ENCODE measurements at regions of chr20 and their contacts with region 1.

Region 1: DNA sequence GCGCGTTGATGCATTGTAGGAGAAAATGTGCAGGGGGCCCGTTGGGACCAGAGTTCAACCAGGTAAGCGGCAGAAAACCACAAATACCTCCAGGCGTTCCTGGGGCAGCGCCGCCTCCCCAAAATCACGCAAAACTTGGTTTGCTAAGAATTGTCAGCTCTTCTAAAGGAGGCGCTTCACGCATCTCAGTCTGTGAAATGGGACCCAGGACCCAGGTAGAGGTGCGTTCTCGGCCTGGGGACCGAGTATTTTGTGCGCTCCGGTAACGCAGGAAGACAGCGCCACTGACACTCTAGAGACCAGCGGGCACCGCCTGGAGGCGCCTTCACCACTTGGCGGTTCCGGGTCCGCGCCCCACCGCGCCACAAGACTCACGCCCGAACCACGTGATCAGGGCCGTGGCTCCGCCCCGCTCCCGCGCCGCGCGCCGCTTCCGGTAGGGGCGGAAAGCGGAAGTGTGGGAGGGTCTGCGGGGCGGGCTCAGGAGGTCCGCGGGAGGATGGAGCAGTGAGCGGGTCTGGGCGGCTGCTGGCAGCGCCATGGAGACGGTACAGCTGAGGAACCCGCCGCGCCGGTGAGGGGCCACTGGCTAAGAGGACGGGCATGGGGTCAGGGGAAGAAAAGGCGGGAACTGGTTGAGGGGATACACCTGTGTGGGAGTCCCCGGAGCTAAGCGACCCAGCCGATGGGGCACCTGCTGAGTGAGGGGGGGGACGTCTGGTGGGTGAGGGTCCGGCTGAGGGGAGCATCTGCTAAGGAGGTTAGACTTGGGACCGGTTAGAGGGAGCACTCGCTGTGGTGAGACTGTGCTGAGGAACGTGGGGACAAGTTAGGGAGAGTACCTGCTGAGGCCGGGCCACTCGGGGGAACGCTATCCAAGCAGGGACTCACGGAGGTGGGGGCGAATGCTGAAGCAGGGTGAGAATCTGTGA is at the start of gene STK4:
- DNase-seq: peak; percentile 95
- H3K4me3 Mint-ChIP-seq: peak within 1 kb of the TSS; percentile 92
- H3K27ac Mint-ChIP-seq: peak within 1 kb of the TSS; percentile 88
- H3K4me1 Mint-ChIP-seq: peaks cover 77% of the 10 kb centered on the region
- H3K27me3 Mint-ChIP-seq: no peaks in the 10 kb centered on the region
- total RNA-seq, gene STK4: 149 and 155 TPM in 2 replicates

Region 2: GRCh38 chr20:44885392-44886265 is 80.7 kb before region 1 on chr20 and contains the start of gene YWHAB:
- intact Hi-C with region 1: loop called (anchors 2 kb)
- DNase-seq: peak; percentile 97
- H3K4me3 Mint-ChIP-seq: peak within 1 kb of the TSS; percentile 95
- H3K27ac Mint-ChIP-seq: peak within 1 kb of the TSS; percentile 94
- H3K4me1 Mint-ChIP-seq: peaks cover 54% of the 10 kb centered on the region
- H3K27me3 Mint-ChIP-seq: no peaks in the 10 kb centered on the region
- total RNA-seq, gene YWHAB: 230 and 246 TPM in 2 replicates

Region 3: DNA sequence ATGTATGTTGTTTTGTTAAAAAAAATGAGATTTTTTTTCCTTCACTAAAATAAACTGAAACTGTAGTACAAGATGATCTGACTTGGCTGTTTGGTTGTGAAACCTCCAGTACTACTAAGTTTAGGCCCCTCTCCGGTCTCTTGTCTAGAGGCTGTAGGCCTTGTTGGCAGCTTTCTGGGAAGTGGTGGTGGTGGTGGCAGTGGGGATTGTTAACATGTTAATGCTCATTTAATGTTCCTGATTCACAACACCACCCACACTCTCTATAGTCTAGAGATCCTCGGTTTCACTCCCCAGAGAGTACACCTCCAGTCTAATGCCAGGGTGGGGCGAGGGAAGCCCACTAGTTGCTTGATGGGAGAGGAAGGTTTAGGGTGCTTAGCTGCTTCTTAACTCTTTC is 24.1 kb after region 1 on chr20:
- intact Hi-C with region 1: loop called (anchors 1 kb)
- DNase-seq: no peak
- H3K4me3 Mint-ChIP-seq: peak overlapping the region; percentile 82
- H3K27ac Mint-ChIP-seq: peak overlapping the region; percentile 94
- H3K4me1 Mint-ChIP-seq: peaks cover 71% of the 10 kb centered on the region
- H3K27me3 Mint-ChIP-seq: no peaks in the 10 kb centered on the region

Region 4: DNA sequence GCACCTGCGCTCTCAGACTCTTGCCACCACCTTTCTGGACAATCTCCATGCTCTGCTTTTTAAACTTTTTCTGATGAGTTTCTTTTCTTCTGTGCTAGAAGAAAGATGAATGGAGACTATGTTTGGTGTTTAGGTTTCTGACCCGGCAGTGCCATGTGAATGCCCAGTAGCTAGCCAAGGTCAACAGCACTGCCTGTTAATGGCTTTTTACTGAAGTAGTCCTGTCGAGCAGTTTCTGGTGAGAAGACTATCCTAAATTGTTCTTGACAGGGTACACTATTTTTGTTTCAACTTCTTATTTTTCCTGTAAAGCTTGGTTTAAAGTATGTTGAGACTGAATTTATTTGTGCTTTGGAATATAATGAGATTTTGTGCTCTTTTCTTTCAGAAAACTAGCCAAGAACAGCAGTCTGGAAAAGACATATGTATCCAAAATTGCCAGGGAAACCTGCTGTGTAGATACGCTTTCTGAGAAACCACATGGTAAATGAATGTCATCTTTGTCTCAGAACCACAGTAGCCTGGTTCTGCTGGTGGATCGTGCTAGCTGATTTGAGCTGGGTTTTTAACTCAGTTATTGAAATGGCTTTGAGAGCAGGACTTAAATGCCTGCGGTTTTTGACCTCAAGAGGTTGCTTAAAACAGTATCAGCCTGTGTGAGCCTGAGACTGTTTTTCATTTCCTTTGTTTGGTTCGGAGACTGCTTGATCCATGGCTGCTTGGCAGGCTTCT is 86.6 kb after region 1 on chr20:
- intact Hi-C with region 1: no loop called
- DNase-seq: no peak
- H3K4me3 Mint-ChIP-seq: no peak overlapping the region
- H3K27ac Mint-ChIP-seq: peak overlapping the region; percentile 73
- H3K4me1 Mint-ChIP-seq: peaks cover 62% of the 10 kb centered on the region
- H3K27me3 Mint-ChIP-seq: no peaks in the 10 kb centered on the region

Region 5: GRCh38 chr20:45362804-45363610 is 396.7 kb after region 1 on chr20 and contains the start of gene SYS1:
- intact Hi-C with region 1: loop called (anchors 5 kb)
- DNase-seq: peak; percentile 97
- H3K4me3 Mint-ChIP-seq: peak within 1 kb of the TSS; percentile 95
- H3K27ac Mint-ChIP-seq: peak within 1 kb of the TSS; percentile 97
- H3K4me1 Mint-ChIP-seq: peaks cover 69% of the 10 kb centered on the region
- H3K27me3 Mint-ChIP-seq: no peaks in the 10 kb centered on the region
- total RNA-seq, gene SYS1: 25.6 and 26.4 TPM in 2 replicates

Region 6: GRCh38 chr20:45538209-45538799 is 572.0 kb after region 1 on chr20:
- intact Hi-C with region 1: no loop called
- DNase-seq: no peak
- H3K4me3 Mint-ChIP-seq: no peak overlapping the region
- H3K27ac Mint-ChIP-seq: no peak overlapping the region
- H3K4me1 Mint-ChIP-seq: no peaks in the 10 kb centered on the region
- H3K27me3 Mint-ChIP-seq: peaks cover 5% of the 10 kb centered on the region

Region 7: GRCh38 chr20:45934586-45935415 is 968.5 kb after region 1 on chr20 and contains the start of gene PCIF1:
- intact Hi-C with region 1: loop called (anchors 10 kb)
- DNase-seq: peak; percentile 96
- H3K4me3 Mint-ChIP-seq: peak within 1 kb of the TSS; percentile 99
- H3K27ac Mint-ChIP-seq: peak within 1 kb of the TSS; percentile 98
- H3K4me1 Mint-ChIP-seq: peaks cover 23% of the 10 kb centered on the region
- H3K27me3 Mint-ChIP-seq: no peaks in the 10 kb centered on the region
- total RNA-seq, gene PCIF1: 27.9 and 28.5 TPM in 2 replicates